Right ventricle myocardium inferior (tissue), 1 donor: ENCODE measurements at regions of chr3 and their contacts with region 1.

Region 1: DNA sequence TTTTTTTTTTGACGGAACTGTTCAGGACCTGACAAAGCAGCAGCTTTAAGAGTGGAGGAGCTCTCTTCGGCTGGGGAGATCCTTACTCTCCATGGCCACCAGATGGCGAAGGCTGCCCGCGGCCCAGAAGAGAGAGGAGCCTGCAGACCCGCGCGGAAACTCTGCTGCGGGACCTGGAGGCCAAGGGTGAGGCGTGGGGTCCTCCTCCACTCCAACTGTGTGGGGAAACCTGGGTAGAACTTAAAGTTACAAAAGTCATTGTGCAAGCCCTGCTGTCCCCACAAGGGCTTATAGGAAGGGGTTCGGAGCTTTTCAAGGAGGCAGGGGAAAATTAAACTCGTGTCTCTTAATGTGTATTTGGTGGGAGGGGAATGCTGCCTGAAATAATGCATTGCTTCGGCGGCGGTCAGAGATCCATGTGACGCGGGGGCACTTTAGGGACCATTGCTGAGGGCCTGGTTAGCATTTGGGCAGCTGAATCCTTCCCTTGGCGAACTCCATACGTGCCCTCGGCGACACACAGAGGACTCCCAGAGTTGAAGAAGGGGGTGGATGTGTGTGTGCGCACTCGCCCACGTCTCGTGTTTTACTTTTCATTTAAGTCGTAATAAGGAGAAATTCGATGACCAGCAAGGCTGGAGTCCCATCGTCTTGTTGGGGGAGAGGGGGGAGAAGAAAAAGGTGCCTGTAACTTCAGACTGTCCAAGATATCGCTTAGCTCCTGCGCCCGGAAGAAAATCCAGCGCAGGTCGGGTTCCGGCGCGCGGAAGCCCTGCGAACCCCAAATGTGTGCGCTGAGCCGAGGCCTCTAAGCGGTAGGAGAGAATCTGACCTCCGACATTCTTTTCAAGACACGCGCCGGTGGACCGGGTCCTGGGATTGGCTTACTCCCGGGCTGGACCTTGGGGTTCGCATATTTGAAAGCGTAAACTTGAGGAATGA is 9.7 kb downstream of the EOMES start:
- DNase-seq: peak; percentile 87
- ATAC-seq: peak; percentile 97

Region 2: DNA sequence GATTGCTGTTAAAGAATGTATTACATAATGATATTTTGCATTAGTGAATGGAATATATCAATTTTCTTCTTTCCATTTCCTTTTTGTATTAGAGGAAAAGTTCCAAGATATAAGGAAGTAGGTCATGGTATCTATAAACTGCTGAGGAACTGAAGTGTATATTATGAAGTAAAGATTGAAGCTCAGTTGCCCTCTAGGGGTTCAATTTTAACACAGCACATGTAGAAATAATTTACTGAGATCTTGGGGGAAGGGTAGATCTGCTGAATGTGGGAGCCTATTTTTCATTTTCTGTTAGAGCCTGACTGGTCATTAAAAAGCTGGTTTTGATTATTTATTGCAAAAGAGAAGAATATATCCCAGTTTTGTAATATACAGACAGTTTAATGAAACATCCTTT is 574.2 kb after region 1 on chr3:
- intact Hi-C with region 1: loop called (anchors 10 kb)
- DNase-seq: no peak
- ATAC-seq: peak; percentile 70

Region 3: GRCh38 chr3:28328188-28329151 is 616.1 kb after region 1 on chr3:
- intact Hi-C with region 1: loop called (anchors 1 kb)
- DNase-seq: no peak
- ATAC-seq: no peak

Region 4: DNA sequence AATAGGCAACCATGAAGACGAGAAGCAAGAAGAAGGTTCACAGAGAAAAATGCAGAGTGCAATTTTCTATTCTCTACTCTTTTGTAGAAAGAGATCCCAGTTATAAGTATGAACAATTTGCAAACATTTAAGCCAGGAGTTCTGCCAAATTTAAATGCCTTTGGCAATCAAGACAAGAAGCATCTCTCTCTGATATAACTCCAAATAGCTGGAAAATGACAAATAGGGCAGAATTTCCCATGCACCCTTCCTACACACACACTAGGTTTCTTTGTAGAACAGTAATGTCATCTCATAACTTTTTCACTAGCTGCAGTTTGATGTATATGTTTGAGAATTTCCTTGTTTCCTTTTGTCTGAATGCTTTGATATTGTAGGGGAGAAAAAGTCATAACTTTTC is 969.7 kb after region 1 on chr3:
- intact Hi-C with region 1: no loop called
- DNase-seq: no peak
- ATAC-seq: no peak